Ascending aorta (tissue), 2 donors: ENCODE measurements at regions of chr5 and their contacts with region 1.

Region 1: DNA sequence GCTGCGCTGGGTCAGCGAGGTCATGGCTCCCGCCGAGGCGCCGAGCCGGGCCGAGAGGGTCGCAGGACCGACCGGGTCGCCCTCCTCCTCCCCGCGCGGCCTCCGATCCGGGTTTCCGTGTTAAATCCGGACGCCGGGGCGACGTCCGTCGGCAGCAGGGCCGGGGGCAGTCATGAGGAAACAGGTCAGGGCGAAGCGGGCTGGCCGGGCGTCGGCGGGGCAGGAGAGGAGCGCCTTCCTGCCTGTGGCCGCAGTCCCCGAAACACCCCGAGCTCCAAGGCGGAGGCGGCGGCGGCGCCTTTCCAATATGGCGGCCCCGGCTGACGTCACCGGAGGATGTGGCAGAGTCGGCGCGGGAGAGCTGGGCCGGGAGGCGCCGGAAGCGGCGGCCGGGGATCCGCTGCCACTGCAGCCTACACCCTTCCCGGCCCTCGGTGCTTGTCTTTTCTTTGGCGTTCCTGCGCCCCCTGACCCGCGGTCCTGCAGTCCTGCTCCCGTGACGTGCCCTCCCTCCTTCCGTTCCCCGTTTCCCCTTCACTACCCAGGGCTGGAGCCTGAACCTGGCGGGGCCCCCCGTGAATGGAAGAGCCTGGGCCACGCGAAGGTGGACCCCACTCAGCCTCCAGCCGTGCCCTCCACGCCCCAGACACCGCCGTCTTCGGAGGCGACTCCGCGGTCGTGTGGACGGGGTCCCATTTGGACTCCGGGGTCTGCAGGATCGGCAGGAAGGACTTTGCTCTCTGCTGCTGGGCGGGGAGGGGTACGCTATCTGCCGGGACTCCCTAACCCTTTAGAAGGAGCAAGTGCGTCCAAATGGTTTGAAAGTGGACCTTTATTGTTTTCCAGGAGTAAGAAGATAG is at the start of gene GOLPH3:
- DNase-seq: peak; percentile 76 to 97
- H3K4me3 ChIP-seq: peak within 1 kb of the TSS; percentile 92 to 99
- H3K27ac ChIP-seq: peak within 1 kb of the TSS; percentile 100
- H3K4me1 ChIP-seq: peaks cover 4 to 16% of the 10 kb centered on the region in 2 donors
- H3K27me3 ChIP-seq: no peaks in the 10 kb centered on the region
- CTCF ChIP-seq: peak in 1 of 3 experiments; percentile 13
- total RNA-seq, gene GOLPH3: 171 TPM

Region 2: GRCh38 chr5:32115985-32116384 is 58.3 kb before region 1 on chr5:
- intact Hi-C with region 1: no loop called
- DNase-seq: no peak
- H3K4me3 ChIP-seq: no peak overlapping the region
- H3K27ac ChIP-seq: no peak overlapping the region
- H3K4me1 ChIP-seq: no peaks in the 10 kb centered on the region
- H3K27me3 ChIP-seq: no peaks in the 10 kb centered on the region
- CTCF ChIP-seq: no peak

Region 3: GRCh38 chr5:32193591-32193990 is 19.4 kb after region 1 on chr5:
- intact Hi-C with region 1: loop called (anchors 1 kb)
- DNase-seq: peak; percentile 64 to 95
- H3K4me3 ChIP-seq: peak overlapping the region; percentile 26 to 38
- H3K27ac ChIP-seq: peak overlapping the region; percentile 44 to 57
- H3K4me1 ChIP-seq: peaks cover 0 to 13% of the 10 kb centered on the region in 2 donors
- H3K27me3 ChIP-seq: no peaks in the 10 kb centered on the region
- CTCF ChIP-seq: no peak

Region 4: GRCh38 chr5:32232441-32233219 is 58.4 kb after region 1 on chr5:
- intact Hi-C with region 1: loop called (anchors 2 kb)
- DNase-seq: peak; percentile 37 to 86
- H3K4me3 ChIP-seq: no peak overlapping the region
- H3K27ac ChIP-seq: peak overlapping the region; percentile 58 to 65
- H3K4me1 ChIP-seq: peaks cover 0 to 22% of the 10 kb centered on the region in 2 donors
- H3K27me3 ChIP-seq: no peaks in the 10 kb centered on the region
- CTCF ChIP-seq: peak; percentile 73 to 80 (median 78)

Region 5: GRCh38 chr5:32312647-32313523 is 138.6 kb after region 1 on chr5 and contains the start of gene MTMR12:
- intact Hi-C with region 1: loop called (anchors 2 kb)
- DNase-seq: peak; percentile 99 to 100
- H3K4me3 ChIP-seq: peak within 1 kb of the TSS; percentile 80 to 95
- H3K27ac ChIP-seq: peak within 1 kb of the TSS; percentile 94 to 95
- H3K4me1 ChIP-seq: peaks cover 6 to 14% of the 10 kb centered on the region in 2 donors
- H3K27me3 ChIP-seq: no peaks in the 10 kb centered on the region
- CTCF ChIP-seq: no peak
- total RNA-seq, gene MTMR12: 19.5 TPM

Region 6: GRCh38 chr5:32339198-32339597 is 165.0 kb after region 1 on chr5:
- intact Hi-C with region 1: no loop called
- DNase-seq: no peak
- H3K4me3 ChIP-seq: no peak overlapping the region
- H3K27ac ChIP-seq: no peak overlapping the region
- H3K4me1 ChIP-seq: no peaks in the 10 kb centered on the region
- H3K27me3 ChIP-seq: no peaks in the 10 kb centered on the region
- CTCF ChIP-seq: no peak

Region 7: DNA sequence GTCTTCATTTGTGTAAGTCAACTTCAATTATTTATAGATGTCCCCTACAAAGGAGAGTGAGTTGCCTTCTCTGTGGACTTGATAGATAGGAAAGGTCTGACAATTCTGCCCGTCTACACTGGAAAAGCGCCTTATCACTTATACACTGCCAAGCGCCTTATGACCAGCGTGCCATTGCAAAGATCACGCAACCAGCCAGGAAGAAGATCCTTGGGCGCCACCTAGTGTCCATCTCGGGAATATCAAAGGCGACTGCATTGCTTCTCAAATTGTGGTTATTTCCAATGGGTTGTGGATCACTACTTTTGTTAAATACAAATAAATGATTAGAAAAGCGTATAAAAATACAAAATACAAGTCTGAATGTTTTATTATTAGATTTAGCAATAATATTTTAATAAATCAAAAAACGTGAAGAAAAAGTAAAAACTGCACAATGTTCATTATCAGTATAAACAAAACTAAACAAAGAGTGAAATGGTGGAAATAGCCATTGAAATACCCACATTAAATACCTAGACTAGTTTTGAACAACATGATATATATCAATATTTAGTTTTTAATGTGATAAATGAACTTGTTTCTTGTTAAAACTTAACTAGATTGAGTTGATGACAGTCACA is 438.9 kb after region 1 on chr5:
- intact Hi-C with region 1: loop called (anchors 10 kb)
- DNase-seq: peak; percentile 37 to 92
- H3K4me3 ChIP-seq: no peak overlapping the region
- H3K27ac ChIP-seq: peak overlapping the region; percentile 51 to 59
- H3K4me1 ChIP-seq: peaks cover 3 to 13% of the 10 kb centered on the region in 2 donors
- H3K27me3 ChIP-seq: no peaks in the 10 kb centered on the region
- CTCF ChIP-seq: peak; percentile 71 to 91 (median 85)